H1 (cell line): ENCODE measurements at regions of chr1 and their contacts with region 1.

Region 1: GRCh38 chr1:36864182-36864822 is 170.0 kb downstream of the GRIK3 start:
- DNase-seq: peak in 1 of 2 experiments; percentile 88
- H3K4me3 ChIP-seq: no peak overlapping the region
- H3K27ac ChIP-seq: no peak overlapping the region
- H3K4me1 ChIP-seq: no peaks in the 10 kb centered on the region
- H3K27me3 ChIP-seq: no peaks in the 10 kb centered on the region
- CTCF ChIP-seq: peak; percentile 75 to 93 (median 92)
- EP300 ChIP-seq: no peak
- POLR2A ChIP-seq: no peak
- RAD21 ChIP-seq: peak; percentile 54 to 69

Region 2: DNA sequence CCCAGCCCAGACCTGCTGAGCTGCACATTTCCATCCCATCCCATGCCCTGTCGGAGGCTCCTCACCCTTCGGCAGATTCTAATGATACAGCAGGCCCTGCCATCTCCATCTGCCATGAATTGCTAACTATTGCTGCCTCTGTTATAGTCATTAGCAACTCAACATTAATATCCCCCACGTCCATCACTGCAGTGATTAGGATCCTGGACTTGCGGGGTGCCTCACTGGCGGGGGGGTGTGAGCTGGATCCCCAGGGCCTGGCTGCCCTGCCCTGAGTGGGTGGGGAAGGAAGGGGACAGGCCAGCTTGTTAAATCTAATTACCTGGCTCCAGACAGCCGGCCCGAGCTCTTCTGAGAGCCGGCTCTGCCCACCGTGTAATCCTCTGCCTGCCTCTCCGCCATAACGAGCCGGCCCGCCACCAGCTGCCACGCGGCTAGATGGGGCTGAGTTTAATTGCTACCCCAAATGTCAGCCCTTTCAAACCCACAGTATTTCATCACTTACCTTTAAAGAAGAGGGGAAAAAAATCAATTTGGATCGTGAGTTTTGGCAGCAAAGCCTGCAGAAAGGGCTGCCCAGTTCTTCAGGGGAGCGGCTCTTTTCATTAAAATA is 154.3 kb before region 1 on chr1:
- CTCF ChIA-PET with region 1: interaction called, 21 read pairs
- POLR2A ChIA-PET with region 1: no interaction called
- DNase-seq: no peak
- H3K4me3 ChIP-seq: no peak overlapping the region
- H3K27ac ChIP-seq: no peak overlapping the region
- H3K4me1 ChIP-seq: peaks cover 0 to 6% (median under 1%) of the 10 kb centered on the region in 4 experiments; a peak in 5 of 7 replicates
- H3K27me3 ChIP-seq: no peaks in the 10 kb centered on the region; a peak in 3 of 7 replicates
- CTCF ChIP-seq: no peak
- EP300 ChIP-seq: no peak
- POLR2A ChIP-seq: no peak
- RAD21 ChIP-seq: no peak

Region 3: DNA sequence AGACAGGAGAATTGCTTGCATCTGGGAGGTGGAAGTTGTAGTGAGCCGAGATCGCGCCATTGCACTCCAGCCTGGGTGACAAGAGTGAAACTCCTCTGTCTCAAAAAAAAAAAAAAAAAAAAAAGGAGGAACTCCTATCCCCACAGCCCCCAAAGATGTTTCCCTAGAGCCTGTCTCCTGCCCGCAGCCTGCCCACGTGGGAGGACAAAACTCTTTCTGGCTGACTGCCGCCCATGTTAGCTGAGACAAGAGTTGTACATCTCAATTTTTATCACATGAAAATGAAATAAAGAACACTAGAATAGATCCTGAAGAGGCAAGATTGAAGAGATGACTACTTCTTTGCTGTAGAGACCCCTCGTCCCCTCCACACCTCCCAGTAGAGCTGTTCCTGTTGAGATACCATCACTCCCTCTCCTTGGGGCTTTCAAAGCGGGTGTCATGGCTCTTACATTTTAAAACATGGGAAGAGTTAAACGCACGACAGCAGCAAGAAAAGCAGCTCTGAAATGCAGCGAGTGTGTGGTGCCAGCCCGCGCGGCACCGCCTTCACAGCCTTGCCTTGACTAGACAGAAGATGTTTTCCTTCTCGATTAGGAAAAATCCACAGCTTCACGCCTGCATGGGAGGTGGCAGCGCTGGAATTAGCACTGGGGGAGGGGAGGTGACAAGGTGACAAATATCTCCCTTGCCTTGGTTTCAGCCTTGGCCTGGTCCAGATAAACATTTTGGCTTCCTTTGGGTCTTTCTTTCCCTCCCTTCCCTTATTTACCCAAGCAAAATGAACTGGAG is 128.2 kb before region 1 on chr1:
- CTCF ChIA-PET with region 1: interaction called, 10 read pairs
- POLR2A ChIA-PET with region 1: no interaction called
- DNase-seq: no peak
- H3K4me3 ChIP-seq: no peak overlapping the region
- H3K27ac ChIP-seq: no peak overlapping the region
- H3K4me1 ChIP-seq: peaks cover 0 to 15% (median 6%) of the 10 kb centered on the region in 4 experiments; a peak in 4 of 7 replicates
- H3K27me3 ChIP-seq: no peaks in the 10 kb centered on the region
- CTCF ChIP-seq: no peak
- EP300 ChIP-seq: no peak
- POLR2A ChIP-seq: no peak
- RAD21 ChIP-seq: no peak

Region 4: GRCh38 chr1:36831181-36831810 is 33.0 kb before region 1 on chr1:
- CTCF ChIA-PET with region 1: interaction called, 57 read pairs
- POLR2A ChIA-PET with region 1: no interaction called
- DNase-seq: no peak
- H3K4me3 ChIP-seq: no peak overlapping the region
- H3K27ac ChIP-seq: no peak overlapping the region
- H3K4me1 ChIP-seq: peaks cover 0 to 2% (median 0%) of the 10 kb centered on the region in 4 experiments; a peak in 2 of 7 replicates
- H3K27me3 ChIP-seq: no peaks in the 10 kb centered on the region
- CTCF ChIP-seq: no peak
- EP300 ChIP-seq: no peak
- POLR2A ChIP-seq: no peak
- RAD21 ChIP-seq: no peak

Region 5: GRCh38 chr1:36884029-36884701 is 19.9 kb after region 1 on chr1:
- CTCF ChIA-PET with region 1: interaction called, 111 read pairs
- POLR2A ChIA-PET with region 1: no interaction called
- DNase-seq: no peak
- H3K4me3 ChIP-seq: no peak overlapping the region
- H3K27ac ChIP-seq: no peak overlapping the region
- H3K4me1 ChIP-seq: peaks cover 0 to 3% (median 0%) of the 10 kb centered on the region in 4 experiments; a peak in 2 of 7 replicates
- H3K27me3 ChIP-seq: no peaks in the 10 kb centered on the region
- CTCF ChIP-seq: no peak
- EP300 ChIP-seq: no peak
- POLR2A ChIP-seq: no peak
- RAD21 ChIP-seq: no peak

Region 6: DNA sequence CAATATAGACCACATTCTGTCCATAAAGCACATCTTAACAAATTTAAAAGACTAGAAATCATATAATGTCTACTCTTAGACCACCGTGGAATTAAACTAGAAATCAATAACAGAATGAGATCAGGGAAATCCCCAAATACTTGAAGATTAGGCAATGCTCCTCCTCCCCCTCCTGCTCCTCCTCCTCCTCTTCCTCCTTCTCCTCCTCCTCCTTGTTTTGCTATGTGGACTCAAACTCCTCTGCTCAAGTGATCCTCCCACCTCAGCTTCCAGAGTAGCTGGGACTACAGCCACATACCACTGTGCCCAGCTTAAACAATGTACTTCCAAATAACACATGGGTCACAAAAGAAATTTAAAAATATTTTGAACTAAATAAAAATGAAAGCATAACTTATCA is 35.8 kb after region 1 on chr1:
- CTCF ChIA-PET with region 1: no interaction called
- POLR2A ChIA-PET with region 1: no interaction called
- DNase-seq: no peak
- H3K4me3 ChIP-seq: no peak overlapping the region
- H3K27ac ChIP-seq: no peak overlapping the region
- H3K4me1 ChIP-seq: no peaks in the 10 kb centered on the region
- H3K27me3 ChIP-seq: no peaks in the 10 kb centered on the region; a peak in 1 of 7 replicates
- CTCF ChIP-seq: no peak
- EP300 ChIP-seq: no peak
- POLR2A ChIP-seq: no peak
- RAD21 ChIP-seq: no peak

Region 7: GRCh38 chr1:36924282-36924811 is 60.0 kb after region 1 on chr1:
- CTCF ChIA-PET with region 1: interaction called, 11 read pairs
- POLR2A ChIA-PET with region 1: no interaction called
- DNase-seq: peak; percentile 31 to 94
- H3K4me3 ChIP-seq: no peak overlapping the region
- H3K27ac ChIP-seq: no peak overlapping the region
- H3K4me1 ChIP-seq: peaks cover 0 to 12% (median 6%) of the 10 kb centered on the region in 4 experiments; a peak in 5 of 7 replicates
- H3K27me3 ChIP-seq: no peaks in the 10 kb centered on the region
- CTCF ChIP-seq: no peak
- EP300 ChIP-seq: no peak
- POLR2A ChIP-seq: no peak
- RAD21 ChIP-seq: peak; percentile 23 to 28; a peak in 1 of 4 replicates

Region 8: DNA sequence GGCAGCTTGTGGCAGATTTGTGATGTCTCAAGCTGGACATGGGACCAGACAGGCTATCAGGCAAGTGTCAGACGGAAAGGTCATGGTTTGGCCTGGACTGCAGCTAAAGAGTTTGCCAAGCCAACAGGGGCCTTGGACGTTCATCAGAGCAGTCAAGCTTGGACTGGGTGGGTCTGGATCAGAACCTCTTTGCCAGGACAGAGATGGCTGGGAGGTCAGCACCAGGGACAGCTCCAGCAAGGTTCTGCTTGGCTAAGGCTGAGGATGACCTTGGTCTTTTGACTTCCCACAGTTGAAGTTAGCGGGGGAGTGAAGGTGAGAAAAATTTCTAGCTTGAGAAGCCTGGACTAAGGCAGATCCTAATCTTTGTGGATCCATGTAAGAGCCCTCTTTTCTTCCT is 101.9 kb after region 1 on chr1:
- CTCF ChIA-PET with region 1: interaction called, 10 read pairs
- POLR2A ChIA-PET with region 1: no interaction called
- DNase-seq: peak in 1 of 2 experiments; percentile 83
- H3K4me3 ChIP-seq: no peak overlapping the region
- H3K27ac ChIP-seq: no peak overlapping the region
- H3K4me1 ChIP-seq: no peaks in the 10 kb centered on the region; a peak in 4 of 7 replicates
- H3K27me3 ChIP-seq: no peaks in the 10 kb centered on the region
- CTCF ChIP-seq: no peak
- EP300 ChIP-seq: no peak
- POLR2A ChIP-seq: no peak
- RAD21 ChIP-seq: no peak